A673 (cell line): ENCODE measurements at regions of chr16 and their contacts with region 1.

Region 1: DNA sequence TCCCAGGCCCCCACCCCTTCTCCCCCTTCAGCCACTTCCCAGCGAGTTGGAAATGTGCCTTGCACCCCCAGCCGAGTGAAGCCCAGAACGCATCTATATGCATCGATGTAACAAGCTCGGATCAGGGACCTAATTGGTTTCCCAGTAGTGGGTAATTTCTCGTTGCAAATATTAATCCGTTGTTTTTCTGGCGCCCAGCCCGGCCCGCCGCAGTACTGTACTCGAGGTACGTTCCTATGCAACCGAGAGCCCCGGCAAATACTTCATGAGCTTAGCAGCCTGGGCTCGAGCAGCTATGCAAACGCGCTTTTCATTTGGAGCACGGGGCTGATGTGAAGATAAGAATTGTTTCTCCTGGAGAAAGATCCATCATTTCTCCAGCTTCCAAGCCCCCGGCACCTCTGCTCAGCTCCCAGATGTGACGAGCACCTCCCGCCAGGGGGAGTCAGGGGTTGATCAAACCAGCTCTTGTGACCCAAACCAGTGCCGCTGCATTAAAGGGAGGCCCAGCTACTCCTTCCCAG is 229.8 kb downstream of the KATNIP start:
- DNase-seq: peak; percentile 70
- H3K4me3 ChIP-seq: no peak overlapping the region
- H3K27ac ChIP-seq: no peak overlapping the region
- H3K4me1 ChIP-seq: peaks cover 11% of the 10 kb centered on the region
- H3K27me3 ChIP-seq: no peaks in the 10 kb centered on the region
- CTCF ChIP-seq: peak; percentile 65

Region 2: GRCh38 chr16:27107185-27107592 is 672.5 kb before region 1 on chr16:
- CTCF ChIA-PET with region 1: no interaction called
- POLR2A ChIA-PET with region 1: no interaction called
- intact Hi-C with region 1: no loop called
- DNase-seq: peak; percentile 37
- H3K4me3 ChIP-seq: no peak overlapping the region
- H3K27ac ChIP-seq: no peak overlapping the region
- H3K4me1 ChIP-seq: peaks cover 5% of the 10 kb centered on the region
- H3K27me3 ChIP-seq: no peaks in the 10 kb centered on the region
- CTCF ChIP-seq: no peak

Region 3: GRCh38 chr16:27847030-27847550 is 67.4 kb after region 1 on chr16:
- CTCF ChIA-PET with region 1: no interaction called
- POLR2A ChIA-PET with region 1: no interaction called
- intact Hi-C with region 1: loop called (anchors 10 kb)
- DNase-seq: no peak
- H3K4me3 ChIP-seq: no peak overlapping the region
- H3K27ac ChIP-seq: no peak overlapping the region
- H3K4me1 ChIP-seq: no peaks in the 10 kb centered on the region
- H3K27me3 ChIP-seq: peaks cover 20% of the 10 kb centered on the region
- CTCF ChIP-seq: no peak